ENCODE measurements at regions of chr2 and their contacts with region 1.

Region 1: GRCh38 chr2:147843864-147844696 is 749 bp upstream of the ACVR2A start:
- DNase-seq: peak; percentile 92
- ATAC-seq: peak; percentile 81
- H3K4me3 ChIP-seq: peak overlapping the region; percentile 94
- H3K27ac ChIP-seq: peak overlapping the region; percentile 80
- H3K4me1 ChIP-seq: peaks cover 29% of the 10 kb centered on the region
- H3K27me3 ChIP-seq: no peaks in the 10 kb centered on the region
- CTCF ChIP-seq: 0 out of 2 replicates have a peak, but pooled peaks have one; percentile 31

Region 2: DNA sequence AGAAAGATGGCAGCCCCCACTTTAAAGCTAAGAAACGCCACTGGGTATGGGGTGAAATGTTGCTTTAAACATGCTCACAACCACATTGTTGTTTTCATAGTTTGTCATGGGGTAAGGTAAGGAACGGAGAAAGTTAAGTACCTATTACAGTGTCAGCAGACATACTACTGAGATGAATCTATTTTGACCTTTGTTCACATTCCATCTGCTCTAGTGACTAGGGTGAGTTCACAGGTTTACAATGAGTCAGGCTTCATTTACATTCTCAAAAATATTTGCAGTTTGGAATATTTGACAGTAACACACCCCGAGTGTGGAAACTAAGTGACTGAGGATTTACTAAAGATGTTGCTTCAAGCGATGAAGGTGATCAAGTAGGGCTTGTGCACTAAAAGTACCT is 428.0 kb before region 1 on chr2:
- CTCF ChIA-PET with region 1: no interaction called
- POLR2A ChIA-PET with region 1: no interaction called
- intact Hi-C with region 1: loop called (anchors 5 kb)
- DNase-seq: peak; percentile 89
- ATAC-seq: peak; percentile 99
- H3K4me3 ChIP-seq: peak overlapping the region; percentile 20; the same call in 1 of the 2 replicates
- H3K27ac ChIP-seq: peak overlapping the region; percentile 10; the same call in 1 of the 2 replicates
- H3K4me1 ChIP-seq: peaks cover 27% of the 10 kb centered on the region
- H3K27me3 ChIP-seq: no peaks in the 10 kb centered on the region
- CTCF ChIP-seq: no peak

Region 3: GRCh38 chr2:147482111-147482895 is 361.8 kb before region 1 on chr2:
- CTCF ChIA-PET with region 1: no interaction called
- POLR2A ChIA-PET with region 1: no interaction called
- intact Hi-C with region 1: loop called (anchors 10 kb)
- DNase-seq: no peak
- ATAC-seq: no peak; the same call in 1 of the 2 replicates
- H3K4me3 ChIP-seq: no peak overlapping the region
- H3K27ac ChIP-seq: no peak overlapping the region
- H3K4me1 ChIP-seq: peaks cover 11% of the 10 kb centered on the region
- H3K27me3 ChIP-seq: no peaks in the 10 kb centered on the region
- CTCF ChIP-seq: no peak

Region 4: GRCh38 chr2:147636238-147636882 is 207.7 kb before region 1 on chr2:
- CTCF ChIA-PET with region 1: no interaction called
- POLR2A ChIA-PET with region 1: no interaction called
- intact Hi-C with region 1: loop called (anchors 10 kb)
- DNase-seq: peak; percentile 90
- ATAC-seq: peak; percentile 85
- H3K4me3 ChIP-seq: peak overlapping the region; percentile 26; the same call in 1 of the 2 replicates
- H3K27ac ChIP-seq: peak overlapping the region; percentile 39
- H3K4me1 ChIP-seq: peaks cover 25% of the 10 kb centered on the region
- H3K27me3 ChIP-seq: no peaks in the 10 kb centered on the region
- CTCF ChIP-seq: no peak

Region 5: DNA sequence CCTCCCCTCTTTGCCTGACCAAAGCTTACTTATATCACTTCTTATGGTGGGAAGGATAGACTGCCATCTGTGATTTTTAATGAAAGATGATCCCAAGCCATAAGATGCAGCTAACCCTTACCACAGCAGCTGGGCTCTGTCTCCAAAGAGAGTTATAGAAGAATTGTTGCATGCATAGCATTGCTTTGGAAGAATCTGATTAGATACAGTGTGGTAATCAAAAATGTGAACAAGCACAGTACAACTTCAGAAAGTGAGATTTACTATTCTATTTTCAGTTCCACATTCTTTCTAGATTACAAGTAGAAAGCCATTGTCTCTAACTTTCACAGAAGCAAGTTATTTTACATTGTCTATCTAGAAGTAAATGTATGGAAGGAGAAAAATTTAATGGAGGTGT is 128.3 kb before region 1 on chr2:
- CTCF ChIA-PET with region 1: no interaction called
- POLR2A ChIA-PET with region 1: no interaction called
- intact Hi-C with region 1: loop called (anchors 5 kb)
- DNase-seq: no peak
- ATAC-seq: no peak
- H3K4me3 ChIP-seq: no peak overlapping the region
- H3K27ac ChIP-seq: no peak overlapping the region
- H3K4me1 ChIP-seq: peaks cover 21% of the 10 kb centered on the region
- H3K27me3 ChIP-seq: no peaks in the 10 kb centered on the region
- CTCF ChIP-seq: no peak

Region 6: DNA sequence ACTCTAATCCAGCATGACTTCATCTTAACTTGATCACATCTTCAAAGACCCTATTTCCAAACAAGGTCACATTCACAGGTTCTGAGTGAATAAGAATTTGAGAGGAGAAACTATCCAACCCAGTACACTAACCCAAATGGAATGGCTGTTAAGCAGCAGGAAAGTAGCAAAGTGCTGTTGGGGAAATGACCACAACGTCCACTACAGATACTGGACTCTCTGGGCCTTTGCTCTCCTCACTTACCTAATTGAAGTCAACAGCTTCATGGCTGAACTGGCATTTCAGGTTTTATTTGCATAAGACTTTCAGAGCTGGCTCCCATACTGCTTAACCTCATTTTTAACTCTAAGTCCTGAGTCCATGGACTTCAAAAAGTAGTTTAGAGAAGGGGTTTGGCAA is 37.2 kb before region 1 on chr2:
- CTCF ChIA-PET with region 1: no interaction called
- POLR2A ChIA-PET with region 1: no interaction called
- intact Hi-C with region 1: loop called (anchors 1 kb)
- DNase-seq: peak; percentile 33
- ATAC-seq: no peak
- H3K4me3 ChIP-seq: no peak overlapping the region
- H3K27ac ChIP-seq: no peak overlapping the region
- H3K4me1 ChIP-seq: peaks cover 16% of the 10 kb centered on the region
- H3K27me3 ChIP-seq: no peaks in the 10 kb centered on the region
- CTCF ChIP-seq: no peak